PC-3 (cell line): ENCODE measurements at regions of chr19 and their contacts with region 1.

Region 1: GRCh38 chr19:16247353-16248182 is 49.9 kb downstream of the AP1M1 start:
- DNase-seq: peak; percentile 87
- ATAC-seq: peak; percentile 99
- H3K4me3 ChIP-seq: no peak overlapping the region
- H3K27ac ChIP-seq: no peak overlapping the region
- H3K4me1 ChIP-seq: no peaks in the 10 kb centered on the region
- H3K27me3 ChIP-seq: no peaks in the 10 kb centered on the region
- CTCF ChIP-seq: peak; percentile 96

Region 2: GRCh38 chr19:16382775-16383543 is 135.4 kb after region 1 on chr19:
- CTCF ChIA-PET with region 1: interaction called, 15 read pairs
- POLR2A ChIA-PET with region 1: no interaction called
- intact Hi-C with region 1: loop called (anchors 1 kb)
- DNase-seq: peak; percentile 79
- ATAC-seq: peak; percentile 82
- H3K4me3 ChIP-seq: no peak overlapping the region
- H3K27ac ChIP-seq: no peak overlapping the region
- H3K4me1 ChIP-seq: no peaks in the 10 kb centered on the region
- H3K27me3 ChIP-seq: no peaks in the 10 kb centered on the region
- CTCF ChIP-seq: peak; percentile 85